ENCODE measurements at regions of chr6 and their contacts with region 1.

Region 1: GRCh38 chr6:5214570-5215052 is 46.1 kb downstream of the LYRM4 start:
- DNase-seq: peak; percentile 81
- H3K4me3 ChIP-seq: no peak overlapping the region
- H3K27ac ChIP-seq: peak overlapping the region; percentile 72
- H3K4me1 ChIP-seq: peaks cover 54% of the 10 kb centered on the region
- H3K27me3 ChIP-seq: no peaks in the 10 kb centered on the region
- CTCF ChIP-seq: peak; percentile 93

Region 2: DNA sequence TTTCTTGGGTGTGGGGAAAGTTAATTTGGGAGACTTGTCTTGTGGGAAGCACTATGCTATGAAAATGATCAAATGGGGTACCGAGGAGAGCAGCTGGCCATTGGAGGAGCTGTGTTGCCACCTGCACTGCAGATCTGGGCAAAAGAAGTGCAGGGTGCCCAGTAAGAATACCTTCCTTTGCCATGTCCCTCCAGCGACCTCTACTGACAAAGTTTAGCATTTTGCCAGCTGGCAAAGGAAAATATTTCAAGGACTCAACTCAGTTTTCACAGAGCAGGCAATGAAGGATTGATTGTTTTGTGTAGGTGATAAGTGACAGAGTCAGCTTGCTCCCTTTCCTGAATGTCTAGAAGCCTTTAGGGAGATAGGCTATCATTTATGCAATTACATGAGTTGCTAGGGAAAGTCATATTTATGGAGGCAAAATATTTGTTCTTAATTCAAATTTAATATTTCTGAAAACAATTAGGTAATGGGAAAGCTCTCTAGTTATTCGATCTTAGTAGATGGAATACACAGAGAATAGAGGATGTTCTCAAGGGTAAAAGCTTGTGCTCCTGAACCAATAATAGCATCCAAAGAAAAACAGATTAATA is 165.1 kb after region 1 on chr6:
- CTCF ChIA-PET with region 1: interaction called, 4 read pairs
- POLR2A ChIA-PET with region 1: no interaction called
- intact Hi-C with region 1: loop called (anchors 5 kb)
- DNase-seq: peak; percentile 76
- H3K4me3 ChIP-seq: no peak overlapping the region
- H3K27ac ChIP-seq: no peak overlapping the region
- H3K4me1 ChIP-seq: no peaks in the 10 kb centered on the region
- H3K27me3 ChIP-seq: no peaks in the 10 kb centered on the region
- CTCF ChIP-seq: peak; percentile 76

Region 3: GRCh38 chr6:5389086-5389745 is 174.6 kb after region 1 on chr6:
- CTCF ChIA-PET with region 1: no interaction called
- POLR2A ChIA-PET with region 1: no interaction called
- intact Hi-C with region 1: loop called (anchors 5 kb)
- DNase-seq: no peak
- H3K4me3 ChIP-seq: no peak overlapping the region
- H3K27ac ChIP-seq: no peak overlapping the region
- H3K4me1 ChIP-seq: no peaks in the 10 kb centered on the region
- H3K27me3 ChIP-seq: no peaks in the 10 kb centered on the region
- CTCF ChIP-seq: no peak